ENCODE measurements at regions of chr9 and their contacts with region 1.

Region 1: DNA sequence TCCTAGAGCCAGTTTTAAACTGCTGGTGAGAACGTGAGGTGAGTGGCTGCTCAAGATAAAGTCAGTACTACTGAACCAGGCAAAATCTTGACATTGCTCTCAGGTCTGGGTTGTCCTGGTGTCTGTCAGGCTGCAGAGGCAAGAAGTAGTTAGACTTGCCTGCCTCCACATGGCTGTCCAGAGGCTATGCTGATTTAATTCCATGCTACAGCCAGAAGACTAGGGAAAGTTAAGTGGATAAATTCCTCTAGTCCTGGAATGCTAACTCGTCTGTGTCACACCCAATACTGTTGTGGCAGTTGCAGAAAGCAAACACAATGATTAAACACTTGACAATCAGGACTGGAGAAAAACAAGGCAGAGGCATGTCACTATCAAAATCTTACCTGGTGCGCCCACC is 118.9 kb downstream of the ACER2 start:
- DNase-seq: no peak
- H3K4me3 ChIP-seq: no peak overlapping the region
- H3K27ac ChIP-seq: no peak overlapping the region
- H3K4me1 ChIP-seq: no peaks in the 10 kb centered on the region
- H3K27me3 ChIP-seq: no peaks in the 10 kb centered on the region
- CTCF ChIP-seq: no peak
- POLR2A ChIP-seq: no peak

Region 2: DNA sequence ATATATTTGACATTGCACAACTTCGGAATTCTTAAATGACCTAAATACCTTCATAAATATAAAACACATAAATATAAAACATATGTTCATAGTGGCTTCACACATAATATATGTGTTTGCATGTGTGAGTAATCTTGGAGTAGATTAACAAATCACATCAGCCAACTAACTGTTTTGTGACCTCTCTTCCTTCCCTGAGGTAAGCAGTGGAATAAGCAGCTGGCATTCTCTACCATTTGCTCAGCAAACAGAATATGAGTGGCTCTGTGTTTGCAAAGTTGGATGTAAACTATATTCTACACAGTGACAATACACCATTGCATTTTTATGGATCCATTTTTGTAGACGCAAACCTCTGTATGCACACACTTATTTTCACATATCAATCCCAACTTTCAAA is 71.1 kb after region 1 on chr9:
- intact Hi-C with region 1: loop called (anchors 10 kb)
- DNase-seq: no peak
- H3K4me3 ChIP-seq: no peak overlapping the region
- H3K27ac ChIP-seq: no peak overlapping the region
- H3K4me1 ChIP-seq: no peaks in the 10 kb centered on the region
- H3K27me3 ChIP-seq: no peaks in the 10 kb centered on the region
- CTCF ChIP-seq: no peak
- POLR2A ChIP-seq: no peak

Region 3: DNA sequence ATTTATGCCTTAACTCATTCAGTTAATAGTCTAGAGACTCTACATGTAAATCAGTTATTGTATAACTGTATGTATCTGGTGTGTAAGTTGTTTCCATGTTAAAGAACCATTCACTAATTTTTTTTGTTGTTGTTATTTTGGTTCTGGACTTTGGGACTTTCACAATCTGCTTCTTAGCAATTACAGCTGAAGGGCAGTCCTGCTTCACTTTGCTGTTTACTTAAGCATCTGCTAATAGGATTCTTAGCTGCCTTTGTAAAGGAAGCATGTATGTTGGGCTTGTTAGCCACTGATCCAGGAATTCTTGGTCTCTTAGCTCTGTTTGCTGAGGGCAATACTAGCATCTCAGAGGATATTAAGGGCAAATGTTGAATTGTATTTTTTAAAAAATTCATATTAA is 1253.4 kb after region 1 on chr9:
- intact Hi-C with region 1: no loop called
- DNase-seq: no peak
- H3K4me3 ChIP-seq: no peak overlapping the region
- H3K27ac ChIP-seq: no peak overlapping the region
- H3K4me1 ChIP-seq: no peaks in the 10 kb centered on the region
- H3K27me3 ChIP-seq: no peaks in the 10 kb centered on the region
- CTCF ChIP-seq: no peak
- POLR2A ChIP-seq: no peak